ENCODE measurements at regions of chr11 and their contacts with region 1.

Region 1: GRCh38 chr11:103035791-103036434 is 56.0 kb downstream of the DCUN1D5 start:
- DNase-seq: peak; percentile 50
- H3K4me3 Mint-ChIP-seq: peak overlapping the region; percentile 16
- H3K27ac Mint-ChIP-seq: peak overlapping the region; percentile 81
- H3K4me1 Mint-ChIP-seq: peaks cover 21% of the 10 kb centered on the region
- H3K27me3 Mint-ChIP-seq: peaks cover 2% of the 10 kb centered on the region

Region 2: GRCh38 chr11:103055221-103055890 is 19.4 kb after region 1 on chr11:
- CTCF ChIA-PET with region 1: interaction called, 10 read pairs
- POLR2A ChIA-PET with region 1: no interaction called
- DNase-seq: no peak
- H3K4me3 Mint-ChIP-seq: no peak overlapping the region
- H3K27ac Mint-ChIP-seq: no peak overlapping the region
- H3K4me1 Mint-ChIP-seq: peaks cover 2% of the 10 kb centered on the region
- H3K27me3 Mint-ChIP-seq: no peaks in the 10 kb centered on the region

Region 3: GRCh38 chr11:103091801-103092524 is 56.0 kb after region 1 on chr11 and contains the start of gene DCUN1D5:
- CTCF ChIA-PET with region 1: interaction called, 9 read pairs
- POLR2A ChIA-PET with region 1: interaction called, 10 read pairs
- DNase-seq: peak; percentile 96
- H3K4me3 Mint-ChIP-seq: peak within 1 kb of the TSS; percentile 93
- H3K27ac Mint-ChIP-seq: peak within 1 kb of the TSS; percentile 91
- H3K4me1 Mint-ChIP-seq: peaks cover 28% of the 10 kb centered on the region
- H3K27me3 Mint-ChIP-seq: peaks cover 12% of the 10 kb centered on the region
- total RNA-seq, gene DCUN1D5: 28.6 to 32.6 TPM

Region 4: GRCh38 chr11:103108933-103109817 is 73.3 kb after region 1 on chr11 and contains the start of gene DYNC2H1:
- CTCF ChIA-PET with region 1: interaction called, 13 read pairs
- POLR2A ChIA-PET with region 1: interaction called, 5 read pairs
- DNase-seq: peak; percentile 92
- H3K4me3 Mint-ChIP-seq: peak within 1 kb of the TSS; percentile 90
- H3K27ac Mint-ChIP-seq: peak within 1 kb of the TSS; percentile 71
- H3K4me1 Mint-ChIP-seq: peaks cover 14% of the 10 kb centered on the region
- H3K27me3 Mint-ChIP-seq: peaks cover 6% of the 10 kb centered on the region
- total RNA-seq, gene DYNC2H1: 3.0 to 3.1 TPM